ENCODE measurements at regions of chr6 and their contacts with region 1.

Region 1: DNA sequence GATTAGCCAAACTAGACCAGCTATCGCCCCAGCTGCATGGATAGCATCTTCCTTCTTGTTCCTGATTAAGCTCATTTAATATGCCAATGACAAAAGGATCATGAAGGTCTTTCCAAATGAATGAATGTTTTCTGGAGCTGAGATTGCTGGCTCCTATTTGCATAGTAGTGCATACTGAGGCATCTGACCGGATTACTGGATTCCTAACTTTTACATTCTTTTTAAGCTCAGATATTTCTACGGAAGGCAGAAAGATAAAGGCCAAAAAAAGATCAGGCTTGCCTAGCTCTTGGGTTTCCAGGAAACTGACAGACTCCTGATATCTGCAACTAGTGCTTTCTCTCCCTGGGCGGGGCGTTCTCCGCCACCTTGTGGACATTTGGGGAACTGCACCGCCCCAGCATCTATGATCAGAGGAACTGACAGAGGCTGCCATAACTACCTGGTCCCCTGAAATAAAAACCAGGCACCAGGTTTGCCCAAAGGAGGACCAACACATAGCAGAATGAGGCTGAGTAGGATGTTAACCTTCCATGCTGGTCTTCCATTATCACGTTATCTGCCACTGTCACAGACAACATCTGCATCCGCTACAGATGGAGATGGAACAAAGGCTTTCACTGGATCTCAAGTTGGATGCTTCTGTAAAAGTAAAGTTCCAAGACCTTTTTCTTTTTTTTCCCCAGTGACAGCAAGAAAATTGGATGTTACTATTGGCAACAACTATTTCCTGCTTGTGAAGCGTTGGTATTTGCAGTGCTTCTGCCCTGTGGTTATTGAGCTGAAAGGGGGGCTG is 33.2 kb downstream of the NT5E start:
- DNase-seq: no peak
- H3K4me3 ChIP-seq: no peak overlapping the region
- H3K27me3 ChIP-seq: no peaks in the 10 kb centered on the region
- CTCF ChIP-seq: peak; percentile 99

Region 2: DNA sequence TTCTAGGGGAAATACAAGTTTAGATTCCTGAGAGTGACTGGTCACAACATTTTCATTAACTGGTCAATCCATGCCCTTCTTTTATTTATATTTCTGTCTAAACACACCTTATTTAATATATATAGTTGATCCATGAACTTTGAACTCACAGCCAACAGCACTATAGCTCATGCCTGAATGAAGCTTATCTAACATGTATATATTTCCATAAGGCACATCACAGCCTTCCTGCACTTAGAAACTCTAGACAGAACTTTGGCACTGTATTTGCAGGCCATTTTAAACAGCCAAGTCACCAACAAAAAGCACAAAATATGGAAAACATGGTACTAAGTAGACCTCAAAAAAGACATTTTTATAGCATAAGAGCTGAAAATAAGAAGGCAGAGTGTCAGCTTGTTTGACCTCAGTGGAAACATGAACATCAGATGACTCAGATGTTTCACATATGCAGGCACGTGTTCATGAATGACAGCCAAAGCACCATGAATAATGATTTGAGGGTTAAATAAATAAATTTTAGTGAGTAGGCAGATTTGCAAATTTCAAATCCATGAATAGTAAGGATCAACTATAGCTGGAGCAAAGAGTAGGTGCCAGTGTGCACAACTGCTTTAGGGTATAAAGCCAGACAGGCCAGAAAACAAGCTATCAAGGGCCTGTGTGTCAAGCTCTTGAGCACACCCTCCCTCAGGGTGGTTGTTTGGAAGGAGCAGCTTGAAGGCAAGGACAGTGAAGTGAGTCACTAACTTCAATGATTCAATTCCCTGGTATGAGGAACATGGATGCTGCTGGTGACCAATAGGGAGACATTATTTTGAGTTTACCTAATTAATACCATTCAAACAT is 122.1 kb before region 1 on chr6:
- CTCF ChIA-PET with region 1: interaction called, 81 read pairs
- POLR2A ChIA-PET with region 1: no interaction called
- DNase-seq: peak; percentile 93
- H3K4me3 ChIP-seq: no peak overlapping the region
- H3K27me3 ChIP-seq: no peaks in the 10 kb centered on the region
- CTCF ChIP-seq: no peak

Region 3: GRCh38 chr6:85449818-85450759 is 33.0 kb before region 1 on chr6 and contains the start of gene NT5E:
- CTCF ChIA-PET with region 1: interaction called, 37 read pairs
- POLR2A ChIA-PET with region 1: no interaction called
- DNase-seq: no peak
- H3K4me3 ChIP-seq: peak within 1 kb of the TSS; percentile 87
- H3K27me3 ChIP-seq: no peaks in the 10 kb centered on the region
- CTCF ChIP-seq: no peak
- polyA plus RNA-seq, gene NT5E: 63.0 and 99.2 TPM in 2 replicates

Region 4: GRCh38 chr6:85468261-85468660 is 14.8 kb before region 1 on chr6:
- CTCF ChIA-PET with region 1: interaction called, 30 read pairs
- POLR2A ChIA-PET with region 1: no interaction called
- DNase-seq: no peak
- H3K4me3 ChIP-seq: no peak overlapping the region
- H3K27me3 ChIP-seq: no peaks in the 10 kb centered on the region
- CTCF ChIP-seq: no peak

Measured in BJ (cell line).